Sigmoid colon (tissue), 7 donors: ENCODE measurements at regions of chr12 and their contacts with region 1.

Region 1: GRCh38 chr12:7018350-7019042 is at the start of gene LPCAT3:
- DNase-seq: peak; percentile 99
- H3K4me3 ChIP-seq: peak within 1 kb of the TSS; percentile 63 to 93 (median 74)
- H3K27ac ChIP-seq: peak within 1 kb of the TSS; percentile 80 to 95 (median 94)
- H3K4me1 ChIP-seq: peaks cover 0 to 24% (median 23%) of the 10 kb centered on the region in 4 donors
- H3K27me3 ChIP-seq: no peaks in the 10 kb centered on the region
- CTCF ChIP-seq: peak; percentile 68 to 84 (median 74)
- EP300 ChIP-seq: peak in 1 of 4 donors; percentile 49
- POLR2A ChIP-seq: peak; percentile 67 to 83
- total RNA-seq, gene LPCAT3: 18.6 to 27.0 (median 25.4) TPM

Region 2: GRCh38 chr12:6899837-6900519 is 118.5 kb before region 1 on chr12:
- intact Hi-C with region 1: no loop called
- DNase-seq: peak; percentile 81
- H3K4me3 ChIP-seq: no peak overlapping the region
- H3K27ac ChIP-seq: no peak overlapping the region
- H3K4me1 ChIP-seq: peaks cover 0 to 8% (median 5%) of the 10 kb centered on the region in 4 donors
- H3K27me3 ChIP-seq: no peaks in the 10 kb centered on the region
- CTCF ChIP-seq: no peak
- EP300 ChIP-seq: no peak
- POLR2A ChIP-seq: peak in 1 of 2 donors; percentile 11

Region 3: DNA sequence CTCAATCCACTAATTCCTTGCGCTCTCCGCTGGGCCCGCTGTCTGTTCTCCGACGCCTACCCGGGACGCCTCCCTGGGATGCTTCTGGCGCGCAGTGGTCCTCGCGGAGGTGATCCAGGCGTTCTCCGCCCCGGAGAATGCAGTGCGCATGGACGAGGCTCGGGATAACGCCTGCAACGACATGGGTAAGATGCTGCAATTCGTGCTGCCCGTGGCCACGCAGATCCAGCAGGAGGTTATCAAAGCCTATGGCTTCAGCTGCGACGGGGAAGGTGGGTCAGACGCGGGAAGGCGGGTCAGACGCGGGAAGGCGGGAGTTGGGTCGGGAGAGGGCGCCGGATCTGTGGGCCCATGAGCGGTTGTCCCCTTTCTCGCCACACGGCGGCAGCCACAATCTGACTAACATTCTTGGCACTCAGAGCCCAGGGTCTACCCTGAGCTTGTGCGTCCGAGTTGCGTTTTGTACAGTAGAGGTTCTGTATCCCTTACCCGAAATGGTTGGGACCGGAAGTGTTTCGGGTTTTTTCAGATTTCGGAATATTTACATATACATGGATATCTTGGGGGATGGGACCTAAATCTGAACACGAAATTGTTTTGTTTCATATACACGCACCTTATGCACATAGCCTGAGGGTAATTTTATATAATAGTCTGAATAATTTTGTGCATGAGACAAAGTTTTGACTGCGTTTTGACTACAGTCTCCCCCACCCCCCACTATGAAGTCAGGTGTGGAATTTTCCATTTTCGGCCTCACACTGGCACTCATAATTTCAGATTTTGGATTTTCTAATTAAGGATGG is 73.9 kb before region 1 on chr12:
- intact Hi-C with region 1: loop called (anchors 2 kb)
- DNase-seq: peak; percentile 98
- H3K4me3 ChIP-seq: peak overlapping the region; percentile 52 to 76 (median 70)
- H3K27ac ChIP-seq: peak overlapping the region; percentile 92 to 99 (median 96)
- H3K4me1 ChIP-seq: peaks cover 0 to 55% (median 43%) of the 10 kb centered on the region in 4 donors
- H3K27me3 ChIP-seq: no peaks in the 10 kb centered on the region
- CTCF ChIP-seq: peak; percentile 77 to 97 (median 89)
- EP300 ChIP-seq: no peak
- POLR2A ChIP-seq: no peak

Region 4: GRCh38 chr12:6996040-6996441 is 22.5 kb before region 1 on chr12:
- intact Hi-C with region 1: loop called (anchors 2 kb)
- DNase-seq: no peak
- H3K4me3 ChIP-seq: no peak overlapping the region
- H3K27ac ChIP-seq: no peak overlapping the region
- H3K4me1 ChIP-seq: no peaks in the 10 kb centered on the region
- H3K27me3 ChIP-seq: no peaks in the 10 kb centered on the region
- CTCF ChIP-seq: no peak
- EP300 ChIP-seq: no peak
- POLR2A ChIP-seq: no peak